ENCODE measurements at regions of chr10 and their contacts with region 1.

Region 1: DNA sequence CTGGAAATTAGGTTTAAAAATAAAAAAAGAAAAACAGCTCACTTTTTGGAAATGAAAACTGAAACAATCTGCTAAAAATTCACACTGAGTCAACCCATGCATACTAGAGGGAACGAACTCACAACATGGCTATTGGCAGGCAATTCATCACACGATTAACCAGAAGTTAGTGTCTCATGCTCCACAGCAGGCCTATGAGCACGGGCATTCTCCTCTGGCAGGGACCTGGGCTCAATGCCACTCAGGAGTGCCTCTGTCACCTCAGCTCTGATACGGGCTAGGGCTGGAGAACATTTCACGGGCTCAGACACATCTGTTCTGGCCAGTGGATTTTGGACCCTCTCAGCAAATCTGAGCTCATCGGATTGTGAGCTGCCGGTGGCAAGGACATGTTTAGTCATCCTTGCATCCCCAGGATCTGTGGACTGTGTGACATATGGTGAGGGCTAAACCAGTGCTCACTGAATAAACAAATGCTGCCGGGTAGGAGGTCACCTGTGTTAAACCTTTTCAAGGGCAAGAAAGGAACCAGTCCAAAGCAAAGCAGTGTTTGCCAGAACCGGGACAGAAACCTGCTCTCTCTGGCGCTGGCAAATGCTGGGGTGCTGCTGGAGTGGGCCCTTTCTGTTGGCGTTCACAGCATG is 40.1 kb downstream of the POLR3A start:
- DNase-seq: peak; percentile 66 to 87
- H3K4me3 ChIP-seq: no peak overlapping the region
- H3K27ac ChIP-seq: peak overlapping the region; percentile 84 to 89
- H3K4me1 ChIP-seq: peaks cover 13 to 29% of the 10 kb centered on the region in 2 donors
- H3K27me3 ChIP-seq: no peaks in the 10 kb centered on the region
- CTCF ChIP-seq: no peak

Region 2: DNA sequence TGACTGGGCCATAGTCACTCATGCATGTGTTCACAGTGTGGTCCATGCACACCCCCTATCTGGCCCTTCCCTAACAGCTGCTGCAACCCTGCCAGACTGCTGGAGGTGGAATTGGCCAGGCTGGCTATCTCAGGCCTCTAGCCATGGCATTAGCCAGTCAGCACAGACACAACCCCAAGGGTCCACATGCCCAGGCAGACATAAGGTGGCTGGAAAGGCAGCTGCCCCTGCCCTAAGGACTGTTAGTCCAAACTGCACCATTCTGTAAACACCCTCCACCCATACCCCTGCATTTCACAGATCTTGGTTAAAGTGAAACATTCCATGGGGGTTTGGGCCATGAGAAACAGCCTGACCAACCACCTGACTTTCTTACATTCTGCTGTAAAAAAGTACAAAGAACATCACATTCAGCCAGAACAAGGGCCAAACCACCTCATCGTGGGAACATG is 214.2 kb before region 1 on chr10:
- intact Hi-C with region 1: no loop called
- DNase-seq: no peak
- H3K4me3 ChIP-seq: no peak overlapping the region
- H3K27ac ChIP-seq: no peak overlapping the region
- H3K4me1 ChIP-seq: no peaks in the 10 kb centered on the region
- H3K27me3 ChIP-seq: no peaks in the 10 kb centered on the region
- CTCF ChIP-seq: no peak

Region 3: DNA sequence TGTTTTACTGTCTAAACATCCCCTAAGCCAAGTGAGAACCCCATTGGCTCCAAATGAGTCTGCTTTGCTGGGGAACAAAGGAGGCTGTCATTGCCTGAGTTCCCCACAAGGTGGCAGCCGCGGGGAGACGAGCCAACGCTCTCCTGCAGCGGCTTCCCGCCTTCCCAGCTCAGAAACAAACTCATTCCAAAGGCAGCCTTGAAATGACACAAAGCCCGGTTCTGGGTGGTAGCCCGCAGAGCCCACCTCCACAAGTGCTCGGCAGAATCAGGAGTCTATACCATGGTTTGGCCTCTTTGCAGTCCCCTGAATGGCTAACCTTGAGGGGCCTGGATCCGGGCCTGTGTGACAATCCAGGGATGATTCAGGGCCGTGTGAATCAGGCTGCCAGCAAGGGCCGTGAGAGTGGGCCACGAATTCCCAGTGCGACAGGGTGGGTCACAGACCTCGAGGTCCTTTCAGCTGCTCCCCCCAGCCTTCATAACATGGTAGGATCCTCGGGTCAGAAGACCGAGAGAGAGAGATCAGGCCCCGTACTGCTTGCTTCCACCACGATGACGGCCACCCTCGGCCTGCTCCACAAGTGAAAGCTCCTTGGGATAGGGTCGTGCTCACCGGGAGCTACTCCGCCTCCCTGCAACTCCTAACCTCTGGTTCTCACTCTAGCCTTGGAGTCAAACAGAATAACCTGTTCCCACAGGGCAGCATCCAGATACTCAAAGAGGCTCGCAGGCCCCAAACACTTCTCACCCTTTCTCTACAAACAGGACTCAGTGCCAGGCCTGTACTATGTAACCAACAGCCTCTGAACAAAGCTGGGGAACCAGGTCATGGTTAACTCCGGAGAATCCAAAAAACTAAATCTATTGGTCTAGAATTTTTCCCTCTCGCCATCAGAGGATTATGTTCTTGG is 142.2 kb before region 1 on chr10:
- intact Hi-C with region 1: loop called (anchors 2 kb)
- DNase-seq: peak; percentile 22 to 85
- H3K4me3 ChIP-seq: no peak overlapping the region
- H3K27ac ChIP-seq: peak overlapping the region; percentile 73 to 75
- H3K4me1 ChIP-seq: peaks cover 0 to 8% of the 10 kb centered on the region in 2 donors
- H3K27me3 ChIP-seq: no peaks in the 10 kb centered on the region
- CTCF ChIP-seq: peak; percentile 89 to 98 (median 96)

Region 4: GRCh38 chr10:77926566-77927401 is 62.4 kb before region 1 on chr10 and contains the start of gene DLG5:
- intact Hi-C with region 1: loop called (anchors 1 kb)
- DNase-seq: peak in 1 of 2 donors; percentile 82
- H3K4me3 ChIP-seq: peak within 1 kb of the TSS; percentile 86 to 93
- H3K27ac ChIP-seq: peak within 1 kb of the TSS; percentile 78
- H3K4me1 ChIP-seq: peaks cover 4 to 21% of the 10 kb centered on the region in 2 donors
- H3K27me3 ChIP-seq: no peaks in the 10 kb centered on the region
- CTCF ChIP-seq: no peak
- total RNA-seq, gene DLG5: 32.9 TPM

Region 5: GRCh38 chr10:77970869-77971803 is 18.1 kb before region 1 on chr10:
- intact Hi-C with region 1: loop called (anchors 1 kb)
- DNase-seq: peak; percentile 61 to 91
- H3K4me3 ChIP-seq: peak overlapping the region; percentile 27
- H3K27ac ChIP-seq: peak overlapping the region; percentile 84 to 89
- H3K4me1 ChIP-seq: peaks cover 0 to 32% of the 10 kb centered on the region in 2 donors
- H3K27me3 ChIP-seq: no peaks in the 10 kb centered on the region
- CTCF ChIP-seq: no peak

Region 6: DNA sequence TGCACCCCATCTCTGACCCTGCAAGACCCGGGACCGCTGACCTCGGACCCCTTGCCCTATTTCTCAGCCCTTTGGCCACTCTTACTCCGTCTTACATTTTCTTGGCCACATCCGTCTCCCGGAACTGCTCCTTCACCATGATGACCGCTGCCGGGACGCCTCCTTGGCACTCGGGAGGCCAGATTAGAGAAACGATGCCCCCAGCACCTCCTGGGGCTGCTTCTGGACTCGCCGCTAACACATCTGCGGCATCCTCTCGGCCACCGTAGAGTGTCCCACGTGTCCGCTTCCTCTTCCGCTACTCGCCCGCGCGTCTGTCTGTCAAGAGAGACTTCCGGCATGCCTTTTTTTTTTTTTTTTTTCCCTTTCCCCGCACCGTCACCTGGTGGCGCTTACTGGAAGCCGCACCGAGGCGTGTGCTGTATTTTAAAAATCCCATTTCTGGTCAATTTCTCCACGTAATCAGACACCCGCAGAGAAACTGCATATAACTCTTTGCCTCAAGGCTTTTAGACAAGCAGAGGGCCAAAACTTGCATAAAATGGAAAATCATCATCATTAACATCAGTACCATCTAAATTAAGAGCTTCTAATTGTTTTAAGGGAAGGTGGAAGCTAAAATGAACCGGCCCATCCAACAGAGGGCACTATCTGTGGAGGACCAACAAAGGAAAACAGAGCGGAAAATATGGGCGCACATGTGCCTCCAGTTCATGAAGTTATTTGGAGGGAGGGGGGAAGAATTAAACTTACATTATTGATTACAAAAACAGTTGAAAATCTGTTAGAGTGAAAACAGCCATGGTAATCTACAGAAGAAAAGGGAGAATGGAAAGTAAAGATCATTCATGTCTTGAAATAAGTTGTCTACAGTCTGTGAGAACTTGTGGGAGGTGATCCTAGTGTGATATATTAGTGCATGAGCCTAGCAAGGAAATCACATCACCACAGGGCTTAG is 40.3 kb after region 1 on chr10 and contains the start of gene POLR3A:
- intact Hi-C with region 1: loop called (anchors 2 kb)
- DNase-seq: peak; percentile 82 to 98
- H3K4me3 ChIP-seq: peak within 1 kb of the TSS; percentile 96
- H3K27ac ChIP-seq: peak within 1 kb of the TSS; percentile 73 to 82
- H3K4me1 ChIP-seq: peaks cover 9 to 15% of the 10 kb centered on the region in 2 donors
- H3K27me3 ChIP-seq: no peaks in the 10 kb centered on the region
- CTCF ChIP-seq: peak; percentile 58 to 79 (median 69)
- total RNA-seq, gene POLR3A: 18.6 TPM

Measured in ascending aorta (tissue), 2 donors.